MCF 10A (cell line): ENCODE measurements at regions of chr20 and their contacts with region 1.

Region 1: DNA sequence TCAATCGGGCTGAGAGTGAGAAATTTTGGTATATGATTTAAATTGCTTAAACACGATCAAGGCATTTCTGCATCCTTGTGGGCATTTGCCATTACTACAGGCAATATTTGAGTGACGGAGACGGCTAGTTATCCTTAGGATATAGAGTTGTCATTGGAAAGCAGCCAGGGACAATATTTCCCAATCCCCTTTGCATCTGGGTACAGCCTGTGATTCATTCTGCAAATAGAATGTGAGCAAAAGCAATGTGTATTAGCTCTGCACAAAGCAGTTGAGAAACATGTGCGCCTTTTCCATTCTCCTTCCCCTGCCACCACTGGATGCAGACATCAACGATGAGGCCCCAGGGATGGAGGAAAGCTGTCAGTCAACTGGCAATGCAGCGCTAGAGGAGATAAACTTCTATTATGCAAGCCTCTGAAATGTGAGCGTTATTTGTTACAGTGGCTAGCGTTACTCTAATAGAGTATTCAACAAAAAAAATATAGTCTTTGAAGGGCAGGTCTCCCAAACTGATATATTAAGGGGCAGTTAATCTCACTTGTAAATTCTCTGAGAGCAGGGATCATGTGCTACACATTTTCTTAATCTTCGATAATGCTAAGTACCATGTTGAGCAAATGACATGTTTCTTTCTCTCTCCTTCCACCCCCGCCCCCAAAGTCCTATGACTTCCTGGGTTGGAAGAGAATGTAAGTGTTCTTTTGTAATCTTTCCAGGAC is 37.1 kb upstream of the NCOA3 start:
- DNase-seq: peak; percentile 99
- H3K4me3 Mint-ChIP-seq: peak overlapping the region; percentile 51
- H3K27ac Mint-ChIP-seq: peak overlapping the region; percentile 72
- H3K4me1 Mint-ChIP-seq: peaks cover 38% of the 10 kb centered on the region
- H3K27me3 Mint-ChIP-seq: no peaks in the 10 kb centered on the region
- CTCF ChIP-seq: no peak

Region 2: DNA sequence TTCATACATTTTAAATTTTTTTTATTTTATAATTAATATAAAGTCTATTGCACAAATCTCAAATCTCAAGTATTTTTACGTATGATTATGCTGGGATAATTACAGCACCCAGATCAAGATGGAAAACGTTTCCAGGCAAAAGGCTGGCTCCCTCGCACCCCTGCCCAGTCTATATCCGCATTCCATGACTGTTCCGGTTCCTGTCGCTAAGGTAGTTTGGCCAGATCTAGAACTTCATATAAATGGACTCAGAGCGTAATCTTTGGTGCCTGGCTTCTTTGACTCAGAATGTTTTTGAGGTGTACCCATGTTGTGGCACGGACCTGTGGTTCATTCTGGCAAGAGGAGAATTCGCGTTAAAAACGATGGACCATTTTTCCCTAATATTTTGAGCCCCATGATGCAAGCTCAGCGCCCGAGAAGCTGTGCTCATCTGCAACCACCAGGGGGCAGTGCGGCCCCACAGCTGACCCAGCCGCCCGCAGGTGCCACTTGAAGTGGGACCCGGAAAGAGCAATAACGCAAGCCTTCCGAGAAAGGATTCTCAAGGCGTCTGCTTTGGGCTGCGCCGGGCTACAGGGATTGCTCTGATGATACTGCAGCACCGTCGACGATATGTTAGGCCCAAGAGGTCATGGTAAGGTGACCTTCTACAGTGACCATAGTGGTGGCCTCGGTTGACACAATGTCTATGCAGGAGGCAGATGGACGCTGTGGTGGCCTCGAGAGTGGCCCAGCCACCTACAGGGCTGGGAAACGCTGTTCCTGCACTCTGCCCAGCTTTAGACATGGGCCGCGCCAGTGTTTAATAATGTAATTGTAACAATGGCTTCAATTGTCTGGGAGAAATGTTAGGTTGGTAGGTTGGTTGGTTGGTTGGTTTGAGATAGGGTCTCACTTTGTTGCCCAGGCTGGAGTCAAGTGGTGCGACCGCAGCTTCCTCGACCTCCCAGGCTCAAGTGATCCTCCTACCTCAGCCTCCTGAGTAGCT is 268.2 kb before region 1 on chr20:
- CTCF ChIA-PET with region 1: no interaction called
- POLR2A ChIA-PET with region 1: no interaction called
- intact Hi-C with region 1: loop called (anchors 1 kb)
- DNase-seq: peak; percentile 70
- H3K4me3 Mint-ChIP-seq: no peak overlapping the region
- H3K27ac Mint-ChIP-seq: no peak overlapping the region
- H3K4me1 Mint-ChIP-seq: peaks cover 5% of the 10 kb centered on the region
- H3K27me3 Mint-ChIP-seq: no peaks in the 10 kb centered on the region
- CTCF ChIP-seq: peak; percentile 93

Region 3: GRCh38 chr20:47392015-47392720 is 72.4 kb before region 1 on chr20:
- CTCF ChIA-PET with region 1: no interaction called
- POLR2A ChIA-PET with region 1: interaction called, 78 read pairs
- intact Hi-C with region 1: loop called (anchors 1 kb)
- DNase-seq: peak; percentile 97
- H3K4me3 Mint-ChIP-seq: peak overlapping the region; percentile 67
- H3K27ac Mint-ChIP-seq: peak overlapping the region; percentile 98
- H3K4me1 Mint-ChIP-seq: peaks cover 22% of the 10 kb centered on the region
- H3K27me3 Mint-ChIP-seq: no peaks in the 10 kb centered on the region
- CTCF ChIP-seq: no peak

Region 4: DNA sequence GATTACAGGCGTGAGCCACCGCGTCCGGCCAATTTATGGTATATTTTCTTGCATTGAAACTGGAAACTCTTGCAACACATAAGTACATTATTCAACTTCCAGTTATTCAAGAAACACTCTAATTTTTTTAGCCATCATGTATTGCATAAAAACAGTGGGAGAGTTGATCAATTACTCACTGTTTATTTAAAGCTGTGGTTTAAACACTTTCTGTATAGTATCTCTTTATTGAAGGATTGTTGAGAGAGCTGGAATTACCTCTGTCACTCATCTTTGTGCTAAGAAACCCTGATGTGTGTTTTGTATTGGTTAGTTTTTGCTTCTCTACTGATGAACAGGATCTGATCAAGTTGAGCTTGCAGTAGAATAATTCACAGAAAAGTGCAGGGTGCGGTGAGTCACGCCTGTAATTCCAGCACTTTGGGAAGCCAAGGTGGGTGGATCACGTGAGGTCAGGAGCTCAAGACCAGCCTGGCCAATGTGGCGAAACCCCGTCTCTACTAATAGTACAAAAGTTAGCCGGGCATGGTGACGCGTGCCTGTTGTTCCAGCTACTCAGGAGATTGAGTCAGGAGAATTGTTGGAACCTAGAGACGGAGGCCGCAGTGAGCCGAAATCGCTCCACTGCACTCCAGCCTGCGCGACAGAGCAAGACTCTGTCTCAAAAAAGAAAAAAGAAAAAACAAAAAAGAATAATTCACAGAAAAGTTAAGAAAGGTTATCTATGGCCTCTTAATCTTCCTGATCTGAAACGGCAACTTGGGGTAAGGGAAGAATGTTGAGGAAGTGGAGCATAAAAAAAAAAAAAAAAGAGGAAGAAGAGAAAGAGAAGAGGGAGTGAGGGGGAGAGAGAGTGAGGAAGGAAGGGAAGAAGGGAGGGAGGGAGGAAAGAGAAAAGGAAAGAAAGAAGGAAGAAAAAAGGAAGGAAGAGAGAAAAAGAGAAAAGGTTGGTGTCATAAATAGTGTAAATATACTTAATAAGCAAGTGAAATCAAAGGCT is 32.0 kb before region 1 on chr20:
- CTCF ChIA-PET with region 1: interaction called, 4 read pairs
- POLR2A ChIA-PET with region 1: interaction called, 276 read pairs
- intact Hi-C with region 1: loop called (anchors 1 kb)
- DNase-seq: peak; percentile 94
- H3K4me3 Mint-ChIP-seq: peak overlapping the region; percentile 66
- H3K27ac Mint-ChIP-seq: peak overlapping the region; percentile 99
- H3K4me1 Mint-ChIP-seq: peaks cover 27% of the 10 kb centered on the region
- H3K27me3 Mint-ChIP-seq: no peaks in the 10 kb centered on the region
- CTCF ChIP-seq: no peak

Region 5: GRCh38 chr20:47453142-47453782 is 11.3 kb before region 1 on chr20:
- CTCF ChIA-PET with region 1: interaction called, 4 read pairs
- POLR2A ChIA-PET with region 1: interaction called, 64 read pairs
- intact Hi-C with region 1: loop called (anchors 1 kb)
- DNase-seq: peak; percentile 92
- H3K4me3 Mint-ChIP-seq: peak overlapping the region; percentile 45
- H3K27ac Mint-ChIP-seq: peak overlapping the region; percentile 91
- H3K4me1 Mint-ChIP-seq: peaks cover 27% of the 10 kb centered on the region
- H3K27me3 Mint-ChIP-seq: no peaks in the 10 kb centered on the region
- CTCF ChIP-seq: no peak

Region 6: DNA sequence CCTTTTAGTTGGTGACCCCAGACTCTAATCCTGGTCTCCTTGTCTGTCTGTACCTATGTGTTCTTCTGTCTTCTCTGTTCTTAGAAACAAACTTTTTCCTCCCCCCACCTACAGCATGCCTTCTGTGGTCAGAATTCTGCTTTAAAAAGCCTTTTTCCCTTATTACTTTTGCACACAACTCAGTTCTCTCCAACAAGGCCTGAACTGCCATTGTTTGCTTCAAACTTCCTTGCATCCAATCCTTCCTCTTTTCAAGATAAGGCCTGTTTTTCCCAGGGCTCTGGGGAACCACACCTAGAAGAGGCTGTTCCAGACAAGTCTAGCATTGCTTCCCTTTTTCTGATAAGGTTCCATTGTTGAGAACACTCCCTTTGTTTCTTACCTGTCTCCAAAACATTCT is 15.0 kb after region 1 on chr20:
- CTCF ChIA-PET with region 1: no interaction called
- POLR2A ChIA-PET with region 1: interaction called, 10 read pairs
- intact Hi-C with region 1: no loop called
- DNase-seq: no peak
- H3K4me3 Mint-ChIP-seq: no peak overlapping the region
- H3K27ac Mint-ChIP-seq: no peak overlapping the region
- H3K4me1 Mint-ChIP-seq: peaks cover 10% of the 10 kb centered on the region
- H3K27me3 Mint-ChIP-seq: no peaks in the 10 kb centered on the region
- CTCF ChIP-seq: no peak

Region 7: DNA sequence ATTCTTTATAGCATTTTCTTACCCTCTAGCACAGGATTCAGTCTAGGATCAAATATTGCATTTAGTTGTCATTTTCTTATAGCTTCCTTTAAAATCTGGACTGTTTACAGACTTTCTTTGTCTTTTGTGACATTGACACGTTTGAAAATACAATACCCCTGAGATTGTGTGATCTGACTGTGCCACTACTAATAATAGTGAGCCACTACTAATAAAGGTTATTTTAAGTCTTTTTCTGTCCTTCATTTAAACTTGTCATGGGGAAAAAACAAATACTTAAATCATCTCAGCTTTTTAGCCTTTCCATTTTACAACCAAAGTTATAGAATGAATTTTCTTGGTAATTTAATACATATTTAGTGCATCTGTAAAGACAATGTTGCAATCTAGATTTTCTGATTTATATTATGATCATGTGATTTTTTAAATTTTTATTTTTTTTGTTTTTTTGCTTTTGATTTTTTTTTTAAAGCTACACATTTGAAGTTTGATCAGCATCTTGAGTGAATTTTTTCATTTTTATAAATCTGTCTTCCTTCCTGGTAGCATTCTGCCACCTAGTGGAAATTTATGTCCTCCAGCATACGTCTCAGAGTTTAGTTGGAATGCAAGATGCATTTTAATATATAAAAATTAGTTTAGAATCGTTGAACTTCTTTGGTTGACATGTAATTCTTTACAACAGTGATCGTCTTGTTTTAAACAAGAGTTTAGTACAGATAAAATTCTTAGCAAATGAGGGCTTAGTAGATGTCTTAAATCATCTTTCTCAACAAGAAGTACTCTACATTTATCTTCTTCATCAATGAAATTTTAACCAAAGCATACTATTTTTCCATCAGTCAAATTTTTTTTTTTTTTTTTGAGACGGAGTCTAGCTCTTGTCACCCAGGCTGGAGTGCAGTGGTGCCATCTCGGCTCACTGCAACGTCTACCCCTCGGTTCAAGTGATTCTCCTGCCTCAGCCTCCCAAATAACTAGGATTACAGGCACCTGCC is 156.6 kb after region 1 on chr20:
- CTCF ChIA-PET with region 1: interaction called, 6 read pairs
- POLR2A ChIA-PET with region 1: interaction called, 3 read pairs
- intact Hi-C with region 1: loop called (anchors 2 kb)
- DNase-seq: peak; percentile 53
- H3K4me3 Mint-ChIP-seq: no peak overlapping the region
- H3K27ac Mint-ChIP-seq: peak overlapping the region; percentile 19
- H3K4me1 Mint-ChIP-seq: peaks cover 12% of the 10 kb centered on the region
- H3K27me3 Mint-ChIP-seq: no peaks in the 10 kb centered on the region
- CTCF ChIP-seq: peak; percentile 72